CD4-positive, alpha-beta T cell (primary cell): ENCODE measurements at regions of chr14 and their contacts with region 1.

Region 1: DNA sequence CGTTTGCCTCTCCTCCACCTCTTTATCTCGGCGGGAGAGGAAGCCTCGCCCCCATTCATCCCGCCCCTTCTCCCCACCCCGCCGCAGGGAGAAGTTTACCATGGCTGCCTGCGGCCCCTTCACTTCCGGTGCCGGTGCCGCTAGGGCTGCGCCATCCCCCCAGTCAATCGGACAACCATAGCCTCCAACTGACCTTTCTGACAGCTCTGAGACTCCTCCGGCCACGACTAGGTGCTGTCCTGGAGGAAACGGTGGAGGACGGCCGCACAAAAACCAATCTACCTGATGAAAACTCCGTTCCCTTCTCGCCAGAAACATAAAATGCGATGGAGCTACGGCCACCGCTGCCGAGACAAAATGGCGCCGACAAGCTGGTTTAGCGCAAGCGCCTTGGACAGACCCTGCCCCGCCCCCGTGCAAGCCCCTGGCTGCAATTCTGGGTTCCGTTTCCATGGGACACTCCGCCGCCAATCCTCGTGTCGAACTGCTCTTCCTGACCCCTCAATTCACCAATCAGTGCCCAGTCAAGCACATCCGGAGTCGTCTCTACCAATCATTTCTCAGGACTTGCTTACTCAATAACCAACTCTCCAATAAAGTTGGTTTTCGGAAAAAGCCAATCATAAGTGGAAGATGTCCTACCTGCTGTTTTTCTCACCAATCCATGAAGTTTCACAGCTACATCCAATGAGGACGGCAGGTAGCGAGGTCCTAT is 436 bp upstream of the ARID4A start:
- DNase-seq: peak; percentile 94 to 100 (median 98)
- ATAC-seq: peak; percentile 83
- H3K4me3 ChIP-seq: peak overlapping the region; percentile 85
- H3K4me3 Mint-ChIP-seq: no peak overlapping the region
- H3K27ac ChIP-seq: peak overlapping the region; percentile 95 to 98
- H3K27ac Mint-ChIP-seq: no peak overlapping the region
- H3K4me1 ChIP-seq: peaks cover 30% of the 10 kb centered on the region
- H3K4me1 Mint-ChIP-seq: peaks cover 32% of the 10 kb centered on the region
- H3K27me3 ChIP-seq: no peaks in the 10 kb centered on the region
- H3K27me3 Mint-ChIP-seq: no peaks in the 10 kb centered on the region
- CTCF ChIP-seq: no peak

Region 2: GRCh38 chr14:58239244-58240195 is 58.4 kb before region 1 on chr14:
- CTCF ChIA-PET with region 1: interaction called, 3 read pairs
- POLR2A ChIA-PET with region 1: interaction called, 102 read pairs
- intact Hi-C with region 1: loop called (anchors 1 to 2 kb)
- DNase-seq: peak; percentile 70 to 91 (median 81)
- ATAC-seq: peak; percentile 22
- H3K4me3 ChIP-seq: peak overlapping the region; percentile 83
- H3K4me3 Mint-ChIP-seq: no peak overlapping the region
- H3K27ac ChIP-seq: peak overlapping the region; percentile 38 to 45
- H3K27ac Mint-ChIP-seq: no peak overlapping the region
- H3K4me1 ChIP-seq: peaks cover 8% of the 10 kb centered on the region
- H3K4me1 Mint-ChIP-seq: peaks cover 19% of the 10 kb centered on the region
- H3K27me3 ChIP-seq: no peaks in the 10 kb centered on the region
- H3K27me3 Mint-ChIP-seq: no peaks in the 10 kb centered on the region
- CTCF ChIP-seq: no peak

Region 3: DNA sequence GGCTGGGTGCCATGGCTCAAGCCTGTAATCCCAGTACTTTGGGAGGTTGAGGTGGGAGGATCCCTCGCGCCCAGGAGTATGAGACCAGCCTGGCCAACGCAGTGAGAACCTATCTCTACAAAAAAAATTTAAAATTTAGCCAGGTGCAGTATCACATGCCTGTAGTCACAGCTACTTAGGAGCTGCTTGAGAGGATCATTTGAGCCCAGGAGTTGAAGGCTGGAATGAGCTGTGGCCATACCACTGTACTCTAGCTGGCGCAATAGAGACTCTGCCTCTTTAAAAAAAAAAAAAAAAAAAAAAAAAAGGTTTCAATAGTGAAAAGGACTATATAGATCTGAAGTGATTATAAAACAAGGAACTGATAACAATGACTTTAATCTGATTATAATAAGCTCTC is 39.8 kb before region 1 on chr14:
- CTCF ChIA-PET with region 1: no interaction called
- POLR2A ChIA-PET with region 1: interaction called, 22 read pairs
- intact Hi-C with region 1: no loop called
- DNase-seq: no peak
- ATAC-seq: no peak
- H3K4me3 ChIP-seq: no peak overlapping the region
- H3K4me3 Mint-ChIP-seq: no peak overlapping the region
- H3K27ac ChIP-seq: no peak overlapping the region
- H3K27ac Mint-ChIP-seq: peak overlapping the region; percentile 39
- H3K4me1 ChIP-seq: no peaks in the 10 kb centered on the region
- H3K4me1 Mint-ChIP-seq: peaks cover 20% of the 10 kb centered on the region
- H3K27me3 ChIP-seq: no peaks in the 10 kb centered on the region
- H3K27me3 Mint-ChIP-seq: no peaks in the 10 kb centered on the region
- CTCF ChIP-seq: no peak

Region 4: DNA sequence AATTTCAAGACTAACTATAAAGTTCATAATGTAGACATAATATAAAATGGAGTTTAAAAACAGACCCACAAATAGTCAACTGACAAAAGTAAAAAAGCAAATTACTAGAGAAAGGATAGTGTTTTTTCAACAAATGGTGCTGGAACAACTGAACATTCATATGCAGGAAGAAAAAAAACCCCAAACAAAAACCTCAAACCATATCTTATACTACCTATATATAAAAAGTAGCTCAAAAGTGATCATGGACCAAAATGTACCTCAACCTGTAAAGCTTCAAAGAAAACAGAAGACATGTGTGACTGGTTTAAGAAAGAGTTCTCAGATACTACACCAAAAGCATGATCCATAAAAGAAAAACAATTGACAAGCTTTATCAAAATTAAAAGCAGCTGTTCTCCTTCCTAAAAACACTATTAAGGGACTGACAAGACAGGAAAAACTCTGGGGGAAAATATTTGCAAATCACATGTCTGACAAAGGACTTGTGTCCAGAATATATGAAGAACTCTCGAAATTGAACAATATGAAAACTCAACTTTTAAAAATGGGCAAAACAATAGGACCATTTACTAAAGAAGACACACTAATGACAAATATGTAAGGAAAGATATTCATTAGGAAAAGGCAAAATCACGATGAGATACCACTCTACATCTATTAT is 22.3 kb before region 1 on chr14:
- CTCF ChIA-PET with region 1: no interaction called
- POLR2A ChIA-PET with region 1: interaction called, 29 read pairs
- intact Hi-C with region 1: loop called in 1 of 2 experiments (anchors 2 kb)
- DNase-seq: peak in 1 of 14 experiments; percentile 7
- ATAC-seq: no peak
- H3K4me3 ChIP-seq: no peak overlapping the region
- H3K4me3 Mint-ChIP-seq: peak overlapping the region; percentile 49
- H3K27ac ChIP-seq: peak overlapping the region in 1 of 2 donors; percentile 3
- H3K27ac Mint-ChIP-seq: peak overlapping the region; percentile 60
- H3K4me1 ChIP-seq: peaks cover 12% of the 10 kb centered on the region
- H3K4me1 Mint-ChIP-seq: peaks cover 46% of the 10 kb centered on the region
- H3K27me3 ChIP-seq: no peaks in the 10 kb centered on the region
- H3K27me3 Mint-ChIP-seq: no peaks in the 10 kb centered on the region
- CTCF ChIP-seq: no peak

Region 5: DNA sequence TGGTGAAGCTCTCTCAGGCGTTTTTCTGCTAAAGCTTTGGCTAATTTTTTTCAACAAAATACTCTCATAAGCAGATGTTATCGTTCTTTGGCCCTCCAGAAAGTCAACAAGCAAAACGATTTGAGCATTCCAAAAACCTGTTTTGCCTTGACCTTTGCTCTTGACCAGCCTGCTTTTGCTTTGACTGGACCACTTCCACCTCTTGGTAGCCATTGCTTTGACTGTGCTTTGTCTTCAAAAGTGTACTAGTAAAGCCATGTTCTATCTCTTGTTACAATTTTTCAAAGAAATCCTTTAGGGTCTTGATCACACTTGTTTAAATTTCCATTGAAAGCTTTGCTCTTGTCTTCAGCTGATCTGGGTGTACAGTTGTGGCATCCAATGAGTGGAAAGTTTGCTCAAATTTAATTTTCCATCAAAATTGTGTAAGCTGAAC is 10.3 kb before region 1 on chr14:
- CTCF ChIA-PET with region 1: no interaction called
- POLR2A ChIA-PET with region 1: interaction called, 40 read pairs
- intact Hi-C with region 1: no loop called
- DNase-seq: no peak
- ATAC-seq: no peak
- H3K4me3 ChIP-seq: no peak overlapping the region
- H3K4me3 Mint-ChIP-seq: no peak overlapping the region
- H3K27ac ChIP-seq: no peak overlapping the region
- H3K27ac Mint-ChIP-seq: peak overlapping the region; percentile 28
- H3K4me1 ChIP-seq: peaks cover 17% of the 10 kb centered on the region
- H3K4me1 Mint-ChIP-seq: peaks cover 74% of the 10 kb centered on the region
- H3K27me3 ChIP-seq: no peaks in the 10 kb centered on the region
- H3K27me3 Mint-ChIP-seq: no peaks in the 10 kb centered on the region
- CTCF ChIP-seq: no peak

Region 6: DNA sequence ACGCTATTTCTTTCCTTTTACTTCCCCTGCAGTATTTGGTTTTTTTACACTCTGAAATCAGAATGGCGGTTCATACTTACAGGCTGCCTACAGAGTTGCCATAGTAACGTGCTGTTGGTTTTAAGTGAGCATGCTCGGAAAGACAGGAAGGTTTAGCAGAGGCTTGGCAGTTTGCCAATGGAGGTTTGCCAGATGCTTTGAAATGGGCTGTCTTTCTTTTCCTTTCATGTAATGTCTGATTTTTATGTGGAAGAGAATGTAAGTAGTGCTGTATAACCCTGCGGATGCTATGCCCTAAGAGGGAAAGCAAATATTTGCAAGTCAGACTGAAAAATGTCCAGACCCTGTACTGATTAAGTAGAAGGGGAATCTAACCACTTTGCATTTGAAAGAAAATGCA is 33.2 kb after region 1 on chr14:
- CTCF ChIA-PET with region 1: interaction called, 5 read pairs
- POLR2A ChIA-PET with region 1: interaction called, 41 read pairs
- intact Hi-C with region 1: loop called (anchors 2 kb)
- DNase-seq: peak; percentile 80 to 98 (median 91)
- ATAC-seq: peak; percentile 96
- H3K4me3 ChIP-seq: peak overlapping the region; percentile 1
- H3K4me3 Mint-ChIP-seq: peak overlapping the region; percentile 65
- H3K27ac ChIP-seq: peak overlapping the region; percentile 67 to 72
- H3K27ac Mint-ChIP-seq: peak overlapping the region; percentile 86
- H3K4me1 ChIP-seq: peaks cover 3% of the 10 kb centered on the region
- H3K4me1 Mint-ChIP-seq: peaks cover 33% of the 10 kb centered on the region
- H3K27me3 ChIP-seq: no peaks in the 10 kb centered on the region
- H3K27me3 Mint-ChIP-seq: no peaks in the 10 kb centered on the region
- CTCF ChIP-seq: no peak

Region 7: DNA sequence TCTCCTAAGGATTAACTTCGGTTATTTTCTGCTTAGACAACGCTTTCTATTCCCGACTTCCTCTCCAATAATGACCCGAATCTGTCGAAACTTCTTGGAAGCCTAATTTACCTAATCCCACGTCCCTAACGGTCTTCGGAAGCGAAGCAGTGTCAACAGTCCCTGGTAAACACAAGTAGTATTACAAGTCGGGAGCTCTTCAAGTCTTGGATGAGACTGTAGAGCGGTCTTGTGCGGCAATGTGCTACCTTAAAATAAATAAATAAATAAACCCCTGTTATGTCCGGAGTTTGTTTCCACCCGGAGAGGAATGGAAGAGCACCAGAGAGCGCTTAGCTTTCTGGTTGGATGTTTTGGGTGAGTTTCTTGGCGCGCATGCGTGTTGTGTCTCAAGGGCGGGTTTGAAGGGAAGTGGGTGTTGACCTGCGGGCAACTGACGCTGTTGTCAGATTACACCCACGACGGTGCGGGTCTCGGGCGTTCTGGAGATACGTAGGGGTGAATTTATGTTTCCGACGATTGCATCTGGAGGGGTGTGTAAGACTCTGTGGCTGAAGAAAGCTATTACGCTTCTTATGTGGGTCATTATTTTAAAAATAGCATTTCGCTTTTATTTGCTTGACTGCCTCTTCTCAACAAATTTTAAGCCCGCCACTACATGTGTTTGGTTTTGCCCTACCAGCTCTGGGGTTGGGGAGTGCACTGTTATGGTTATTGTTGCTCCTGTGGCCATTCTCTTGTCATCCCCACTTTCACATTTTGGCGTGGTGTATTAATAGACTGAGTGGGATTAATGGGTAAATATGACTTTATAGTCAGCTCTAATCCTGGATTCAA is 129.6 kb after region 1 on chr14 and contains the starts of genes KIAA0586 and TIMM9:
- CTCF ChIA-PET with region 1: no interaction called
- POLR2A ChIA-PET with region 1: interaction called, 122 read pairs
- intact Hi-C with region 1: loop called (anchors 2 to 5 kb)
- DNase-seq: peak; percentile 91 to 99 (median 96)
- ATAC-seq: peak; percentile 90
- H3K4me3 ChIP-seq: peak within 1 kb of the TSS; percentile 81
- H3K4me3 Mint-ChIP-seq: peak within 1 kb of the TSS; percentile 92
- H3K27ac ChIP-seq: peak within 1 kb of the TSS; percentile 86 to 95
- H3K27ac Mint-ChIP-seq: peak within 1 kb of the TSS; percentile 93
- H3K4me1 ChIP-seq: peaks cover 18% of the 10 kb centered on the region
- H3K4me1 Mint-ChIP-seq: peaks cover 70% of the 10 kb centered on the region
- H3K27me3 ChIP-seq: no peaks in the 10 kb centered on the region
- H3K27me3 Mint-ChIP-seq: no peaks in the 10 kb centered on the region
- CTCF ChIP-seq: no peak
- total RNA-seq, gene KIAA0586: 16.5 to 18.2 TPM
- total RNA-seq, gene TIMM9: 33.1 to 34.9 TPM

Region 8: GRCh38 chr14:58455587-58456228 is 157.8 kb after region 1 on chr14:
- CTCF ChIA-PET with region 1: no interaction called
- POLR2A ChIA-PET with region 1: no interaction called
- intact Hi-C with region 1: no loop called
- DNase-seq: no peak
- ATAC-seq: no peak
- H3K4me3 ChIP-seq: no peak overlapping the region
- H3K4me3 Mint-ChIP-seq: no peak overlapping the region
- H3K27ac ChIP-seq: no peak overlapping the region
- H3K27ac Mint-ChIP-seq: no peak overlapping the region
- H3K4me1 ChIP-seq: no peaks in the 10 kb centered on the region
- H3K4me1 Mint-ChIP-seq: no peaks in the 10 kb centered on the region
- H3K27me3 ChIP-seq: no peaks in the 10 kb centered on the region
- H3K27me3 Mint-ChIP-seq: no peaks in the 10 kb centered on the region
- CTCF ChIP-seq: no peak